MCF 10A (cell line): ENCODE measurements at regions of chr13 and their contacts with region 1.

Region 1: DNA sequence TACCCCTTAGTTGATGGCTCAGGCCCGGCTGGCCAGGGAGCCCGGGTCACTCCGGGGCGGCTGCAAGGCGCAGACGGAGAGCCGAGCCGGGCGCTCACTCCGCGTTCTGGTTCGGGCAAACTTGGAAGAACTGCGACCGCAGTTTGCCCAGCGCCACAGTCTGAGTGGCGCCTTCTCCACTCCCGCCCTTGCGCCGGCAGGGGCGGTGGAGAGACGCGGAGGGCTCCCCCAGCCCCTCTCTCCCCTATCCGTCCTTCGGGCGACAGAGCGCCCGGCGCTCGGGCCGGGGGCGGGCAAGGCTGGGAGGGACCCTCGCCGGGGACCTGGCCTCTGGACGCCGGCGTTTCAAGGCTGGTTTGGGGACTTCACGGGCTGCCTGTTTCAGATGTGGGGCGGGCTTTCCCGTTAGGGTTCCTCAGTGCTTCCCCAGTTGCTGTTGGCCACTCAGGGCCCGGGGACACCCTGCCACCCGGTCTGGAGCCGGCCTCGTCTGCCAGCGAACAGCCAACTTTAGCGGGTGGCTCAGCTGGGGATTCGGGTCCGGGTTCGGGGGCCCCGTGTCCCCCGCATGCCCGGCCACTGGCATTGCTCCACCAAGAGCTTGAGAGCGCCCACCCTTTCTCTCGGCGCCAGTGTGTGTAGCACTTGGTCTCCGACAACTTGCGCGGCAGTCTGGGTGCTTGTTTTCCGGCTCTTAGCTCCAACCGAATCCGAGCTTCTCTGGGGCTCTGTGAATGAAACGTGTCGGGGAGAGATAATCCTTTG is 1.5 kb downstream of the GPC6 start:
- DNase-seq: peak; percentile 92
- H3K4me3 Mint-ChIP-seq: peak overlapping the region; percentile 93
- H3K27ac Mint-ChIP-seq: peak overlapping the region; percentile 86
- H3K4me1 Mint-ChIP-seq: peaks cover 46% of the 10 kb centered on the region
- H3K27me3 Mint-ChIP-seq: no peaks in the 10 kb centered on the region
- CTCF ChIP-seq: peak; percentile 61

Region 2: GRCh38 chr13:92187378-92187989 is 1040.6 kb before region 1 on chr13:
- CTCF ChIA-PET with region 1: no interaction called
- POLR2A ChIA-PET with region 1: no interaction called
- intact Hi-C with region 1: loop called (anchors 10 kb)
- DNase-seq: peak; percentile 66
- H3K4me3 Mint-ChIP-seq: no peak overlapping the region
- H3K27ac Mint-ChIP-seq: no peak overlapping the region
- H3K4me1 Mint-ChIP-seq: no peaks in the 10 kb centered on the region
- H3K27me3 Mint-ChIP-seq: no peaks in the 10 kb centered on the region
- CTCF ChIP-seq: peak; percentile 79

Region 3: GRCh38 chr13:92967923-92968322 is 260.1 kb before region 1 on chr13:
- CTCF ChIA-PET with region 1: interaction called, 7 read pairs
- POLR2A ChIA-PET with region 1: interaction called, 4 read pairs
- intact Hi-C with region 1: loop called (anchors 1 kb)
- DNase-seq: peak; percentile 53
- H3K4me3 Mint-ChIP-seq: no peak overlapping the region
- H3K27ac Mint-ChIP-seq: no peak overlapping the region
- H3K4me1 Mint-ChIP-seq: no peaks in the 10 kb centered on the region
- H3K27me3 Mint-ChIP-seq: no peaks in the 10 kb centered on the region
- CTCF ChIP-seq: peak; percentile 39

Region 4: DNA sequence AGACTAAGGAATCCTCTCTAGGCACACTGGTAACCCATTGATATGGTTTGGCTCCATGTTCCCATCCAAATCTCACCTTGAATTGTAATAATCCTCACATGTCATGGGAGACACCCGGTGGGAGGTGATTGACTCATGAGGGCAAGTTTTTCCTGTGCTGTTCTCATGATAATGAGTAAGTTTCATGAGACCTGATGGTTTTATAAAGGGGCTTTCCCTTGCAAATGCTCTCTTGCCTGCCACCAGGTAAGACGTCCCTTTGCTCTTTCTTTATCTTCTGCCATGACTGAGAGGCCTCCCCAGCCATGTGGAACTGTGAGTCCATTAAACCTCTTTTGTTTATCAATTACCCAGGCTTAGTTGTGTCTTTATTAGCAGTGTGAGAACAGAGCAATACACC is 82.9 kb before region 1 on chr13:
- CTCF ChIA-PET with region 1: no interaction called
- POLR2A ChIA-PET with region 1: no interaction called
- intact Hi-C with region 1: no loop called
- DNase-seq: no peak
- H3K4me3 Mint-ChIP-seq: no peak overlapping the region
- H3K27ac Mint-ChIP-seq: no peak overlapping the region
- H3K4me1 Mint-ChIP-seq: no peaks in the 10 kb centered on the region
- H3K27me3 Mint-ChIP-seq: no peaks in the 10 kb centered on the region
- CTCF ChIP-seq: no peak

Region 5: GRCh38 chr13:93466502-93467036 is 238.5 kb after region 1 on chr13:
- CTCF ChIA-PET with region 1: no interaction called
- POLR2A ChIA-PET with region 1: no interaction called
- intact Hi-C with region 1: loop called (anchors 10 kb)
- DNase-seq: peak; percentile 41
- H3K4me3 Mint-ChIP-seq: no peak overlapping the region
- H3K27ac Mint-ChIP-seq: no peak overlapping the region
- H3K4me1 Mint-ChIP-seq: peaks cover 8% of the 10 kb centered on the region
- H3K27me3 Mint-ChIP-seq: no peaks in the 10 kb centered on the region
- CTCF ChIP-seq: no peak

Region 6: GRCh38 chr13:93690139-93690538 is 462.1 kb after region 1 on chr13:
- CTCF ChIA-PET with region 1: no interaction called
- POLR2A ChIA-PET with region 1: no interaction called
- intact Hi-C with region 1: loop called (anchors 10 kb)
- DNase-seq: peak; percentile 50
- H3K4me3 Mint-ChIP-seq: no peak overlapping the region
- H3K27ac Mint-ChIP-seq: no peak overlapping the region
- H3K4me1 Mint-ChIP-seq: no peaks in the 10 kb centered on the region
- H3K27me3 Mint-ChIP-seq: no peaks in the 10 kb centered on the region
- CTCF ChIP-seq: no peak

Region 7: GRCh38 chr13:94112227-94112626 is 884.2 kb after region 1 on chr13:
- CTCF ChIA-PET with region 1: no interaction called
- POLR2A ChIA-PET with region 1: no interaction called
- intact Hi-C with region 1: loop called (anchors 1 kb)
- DNase-seq: peak; percentile 73
- H3K4me3 Mint-ChIP-seq: no peak overlapping the region
- H3K27ac Mint-ChIP-seq: no peak overlapping the region
- H3K4me1 Mint-ChIP-seq: no peaks in the 10 kb centered on the region
- H3K27me3 Mint-ChIP-seq: no peaks in the 10 kb centered on the region
- CTCF ChIP-seq: no peak

Region 8: GRCh38 chr13:94362411-94362909 is 1134.4 kb after region 1 on chr13:
- CTCF ChIA-PET with region 1: interaction called, 3 read pairs
- POLR2A ChIA-PET with region 1: interaction called, 3 read pairs
- intact Hi-C with region 1: loop called (anchors 1 kb)
- DNase-seq: peak; percentile 87
- H3K4me3 Mint-ChIP-seq: no peak overlapping the region
- H3K27ac Mint-ChIP-seq: no peak overlapping the region
- H3K4me1 Mint-ChIP-seq: no peaks in the 10 kb centered on the region
- H3K27me3 Mint-ChIP-seq: no peaks in the 10 kb centered on the region
- CTCF ChIP-seq: peak; percentile 61